Naive thymus-derived CD4-positive, alpha-beta T cell (primary cell): ENCODE measurements at regions of chr5 and their contacts with region 1.

Region 1: GRCh38 chr5:65925601-65926275 is 637 bp upstream of the ERBIN start:
- DNase-seq: peak; percentile 72 to 85 (median 81)
- ATAC-seq: peak; percentile 87
- H3K4me3 ChIP-seq: peak overlapping the region; percentile 81
- H3K4me3 Mint-ChIP-seq: peak overlapping the region; percentile 88 to 98 (median 93)
- H3K27ac ChIP-seq: peak overlapping the region; percentile 96
- H3K27ac Mint-ChIP-seq: peak overlapping the region; percentile 64 to 97 (median 95)
- H3K4me1 ChIP-seq: peaks cover 17 to 19% of the 10 kb centered on the region in 2 donors
- H3K4me1 Mint-ChIP-seq: peaks cover 29 to 43% (median 40%) of the 10 kb centered on the region in 7 donors
- H3K27me3 ChIP-seq: no peaks in the 10 kb centered on the region
- H3K27me3 Mint-ChIP-seq: peaks cover 0 to 29% (median 0%) of the 10 kb centered on the region in 5 donors

Region 2: GRCh38 chr5:65035211-65036206 is 890.2 kb before region 1 on chr5:
- CTCF ChIA-PET with region 1: no interaction called
- POLR2A ChIA-PET with region 1: no interaction called
- intact Hi-C with region 1: loop called (anchors 5 kb)
- DNase-seq: peak; percentile 60 to 92 (median 85)
- ATAC-seq: peak; percentile 88
- H3K4me3 ChIP-seq: peak overlapping the region; percentile 78
- H3K4me3 Mint-ChIP-seq: peak overlapping the region; percentile 74 to 94 (median 82)
- H3K27ac ChIP-seq: peak overlapping the region; percentile 84
- H3K27ac Mint-ChIP-seq: peak overlapping the region; percentile 84 to 96 (median 90)
- H3K4me1 ChIP-seq: peaks cover 20% of the 10 kb centered on the region in 2 donors
- H3K4me1 Mint-ChIP-seq: peaks cover 3 to 36% (median 29%) of the 10 kb centered on the region in 7 donors
- H3K27me3 ChIP-seq: no peaks in the 10 kb centered on the region
- H3K27me3 Mint-ChIP-seq: no peaks in the 10 kb centered on the region

Region 3: DNA sequence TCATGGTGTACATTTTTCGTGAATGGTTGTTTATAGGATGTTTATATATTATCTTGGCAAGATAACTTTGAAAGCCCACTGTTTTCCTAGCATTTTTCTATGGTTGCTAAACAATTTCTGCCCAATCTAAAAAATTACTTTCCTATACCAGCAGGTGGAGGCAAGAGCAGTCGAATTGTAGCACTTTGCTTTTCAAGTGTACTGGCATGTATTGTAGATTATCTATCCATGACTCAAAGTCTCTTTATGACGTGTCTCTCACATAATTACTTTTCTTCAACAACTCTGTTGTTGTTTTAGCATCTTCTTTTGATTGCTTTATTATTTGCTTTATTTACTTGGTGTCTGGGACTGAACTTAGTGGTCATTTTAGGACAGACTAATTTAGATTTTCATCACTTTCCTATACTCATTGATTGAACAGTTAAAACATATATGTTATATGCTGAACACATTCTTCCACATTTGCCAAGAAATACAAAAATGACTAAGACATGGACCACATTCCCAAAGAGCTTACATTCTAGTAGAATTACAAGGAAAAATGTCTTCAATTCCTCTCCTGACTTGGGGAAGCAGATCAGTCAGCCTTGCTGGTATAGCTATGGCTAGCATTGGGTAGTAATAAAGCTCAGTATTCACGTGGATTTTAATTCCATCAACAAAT is 183.0 kb before region 1 on chr5:
- CTCF ChIA-PET with region 1: no interaction called
- POLR2A ChIA-PET with region 1: no interaction called
- intact Hi-C with region 1: loop called in 1 of 2 experiments (anchors 5 kb)
- DNase-seq: peak in 6 of 9 donors; percentile 13 to 46 (median 27)
- ATAC-seq: peak; percentile 70
- H3K4me3 ChIP-seq: no peak overlapping the region
- H3K4me3 Mint-ChIP-seq: no peak overlapping the region
- H3K27ac ChIP-seq: no peak overlapping the region
- H3K27ac Mint-ChIP-seq: no peak overlapping the region
- H3K4me1 ChIP-seq: no peaks in the 10 kb centered on the region
- H3K4me1 Mint-ChIP-seq: peaks cover 0 to 9% (median 3%) of the 10 kb centered on the region in 7 donors
- H3K27me3 ChIP-seq: no peaks in the 10 kb centered on the region
- H3K27me3 Mint-ChIP-seq: no peaks in the 10 kb centered on the region

Region 4: DNA sequence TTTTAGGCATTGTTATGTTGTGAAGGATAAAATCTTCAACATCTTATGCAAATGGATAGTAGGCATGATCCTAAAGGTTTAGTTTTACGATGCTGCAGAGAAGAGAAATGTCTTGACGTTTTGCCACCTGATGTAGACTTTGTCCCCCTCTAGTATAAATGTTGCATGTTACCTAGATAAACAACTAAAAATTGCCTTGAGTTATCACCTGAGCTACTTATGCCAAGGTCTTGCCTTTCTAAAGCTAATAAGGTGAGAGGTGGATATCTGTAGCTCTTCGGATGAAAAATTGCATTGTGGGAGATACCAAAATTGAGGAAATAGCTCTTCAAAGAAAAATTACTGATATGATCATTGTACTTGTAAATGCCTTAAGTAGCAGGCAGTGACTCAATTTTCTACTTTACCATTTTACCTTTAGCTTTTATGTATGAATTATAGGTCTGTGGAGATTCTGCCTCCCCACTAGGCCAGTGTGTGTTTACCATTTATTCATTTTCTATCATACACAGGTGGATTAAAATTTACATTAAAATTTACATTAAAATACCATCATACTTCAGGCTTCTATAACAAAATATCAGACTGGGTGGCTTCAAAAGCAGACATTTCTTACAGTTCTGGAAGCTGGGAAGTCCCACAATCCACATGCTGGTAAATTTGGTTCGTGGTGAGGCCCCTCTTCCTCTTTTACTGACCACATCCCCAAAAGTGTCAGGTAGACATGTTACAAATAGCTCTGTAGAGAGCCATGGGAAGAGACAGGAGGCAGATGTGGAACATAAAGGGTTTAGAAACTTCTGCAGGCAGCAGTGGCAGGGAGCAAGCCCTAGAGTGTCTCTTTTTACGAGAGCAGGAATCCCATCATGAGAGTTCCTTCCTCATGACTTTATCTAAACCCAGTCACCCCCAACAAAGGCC is 100.1 kb before region 1 on chr5:
- CTCF ChIA-PET with region 1: no interaction called
- POLR2A ChIA-PET with region 1: interaction called, 3 read pairs
- intact Hi-C with region 1: loop called in 1 of 2 experiments (anchors 1 kb)
- DNase-seq: no peak
- ATAC-seq: peak; percentile 70
- H3K4me3 ChIP-seq: no peak overlapping the region
- H3K4me3 Mint-ChIP-seq: peak overlapping the region in 1 of 10 donors; percentile 54
- H3K27ac ChIP-seq: no peak overlapping the region
- H3K27ac Mint-ChIP-seq: no peak overlapping the region
- H3K4me1 ChIP-seq: no peaks in the 10 kb centered on the region
- H3K4me1 Mint-ChIP-seq: peaks cover 0 to 15% (median 8%) of the 10 kb centered on the region in 7 donors
- H3K27me3 ChIP-seq: no peaks in the 10 kb centered on the region
- H3K27me3 Mint-ChIP-seq: no peaks in the 10 kb centered on the region

Region 5: DNA sequence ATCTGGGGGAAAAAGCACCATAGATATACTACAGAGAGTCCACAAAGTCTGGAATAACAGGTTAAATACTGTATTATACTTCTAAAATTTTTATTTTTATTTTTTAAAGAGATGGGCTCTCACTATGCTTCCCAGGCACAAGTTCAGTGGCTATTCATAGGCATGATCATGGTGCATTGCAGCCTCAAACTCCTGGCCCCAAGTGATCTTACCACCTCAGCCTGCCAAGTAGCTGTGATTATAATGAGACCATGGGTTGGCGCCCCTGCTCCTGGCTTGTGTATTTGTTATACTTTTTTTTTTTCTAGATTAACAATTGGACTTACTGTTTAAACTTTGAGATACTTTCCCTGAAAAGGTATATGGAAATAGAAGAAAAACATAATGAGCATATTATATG is 26.5 kb after region 1 on chr5:
- CTCF ChIA-PET with region 1: no interaction called
- POLR2A ChIA-PET with region 1: interaction called, 7 read pairs
- intact Hi-C with region 1: loop called in 1 of 2 experiments (anchors 2 kb)
- DNase-seq: no peak
- ATAC-seq: no peak
- H3K4me3 ChIP-seq: no peak overlapping the region
- H3K4me3 Mint-ChIP-seq: no peak overlapping the region
- H3K27ac ChIP-seq: no peak overlapping the region
- H3K27ac Mint-ChIP-seq: peak overlapping the region in 3 of 9 donors; percentile 32 to 72 (median 54)
- H3K4me1 ChIP-seq: peaks cover 9 to 29% of the 10 kb centered on the region in 2 donors
- H3K4me1 Mint-ChIP-seq: peaks cover 16 to 81% (median 38%) of the 10 kb centered on the region in 7 donors
- H3K27me3 ChIP-seq: no peaks in the 10 kb centered on the region
- H3K27me3 Mint-ChIP-seq: no peaks in the 10 kb centered on the region

Region 6: GRCh38 chr5:66010476-66010875 is 84.7 kb after region 1 on chr5:
- CTCF ChIA-PET with region 1: no interaction called
- POLR2A ChIA-PET with region 1: interaction called, 6 read pairs
- intact Hi-C with region 1: loop called (anchors 5 kb)
- DNase-seq: peak in 4 of 9 donors; percentile 1 to 35 (median 22)
- ATAC-seq: peak; percentile 61
- H3K4me3 ChIP-seq: no peak overlapping the region
- H3K4me3 Mint-ChIP-seq: peak overlapping the region in 2 of 10 donors; percentile 17 to 53
- H3K27ac ChIP-seq: peak overlapping the region; percentile 30
- H3K27ac Mint-ChIP-seq: peak overlapping the region in 7 of 9 donors; percentile 14 to 85 (median 77)
- H3K4me1 ChIP-seq: peaks cover 12 to 19% of the 10 kb centered on the region in 2 donors
- H3K4me1 Mint-ChIP-seq: peaks cover 21 to 62% (median 35%) of the 10 kb centered on the region in 7 donors
- H3K27me3 ChIP-seq: no peaks in the 10 kb centered on the region
- H3K27me3 Mint-ChIP-seq: no peaks in the 10 kb centered on the region

Region 7: GRCh38 chr5:67003935-67004729 is 1078.4 kb after region 1 on chr5:
- CTCF ChIA-PET with region 1: no interaction called
- POLR2A ChIA-PET with region 1: no interaction called
- intact Hi-C with region 1: loop called in 1 of 2 experiments (anchors 10 kb)
- DNase-seq: peak; percentile 71 to 91 (median 87)
- ATAC-seq: peak; percentile 91
- H3K4me3 ChIP-seq: peak overlapping the region; percentile 97
- H3K4me3 Mint-ChIP-seq: peak overlapping the region; percentile 92 to 99 (median 97)
- H3K27ac ChIP-seq: peak overlapping the region; percentile 75
- H3K27ac Mint-ChIP-seq: peak overlapping the region; percentile 93 to 98 (median 95)
- H3K4me1 ChIP-seq: peaks cover 7 to 28% of the 10 kb centered on the region in 2 donors
- H3K4me1 Mint-ChIP-seq: peaks cover 25 to 62% (median 55%) of the 10 kb centered on the region in 7 donors
- H3K27me3 ChIP-seq: no peaks in the 10 kb centered on the region
- H3K27me3 Mint-ChIP-seq: no peaks in the 10 kb centered on the region